HEK293T (cell line): ENCODE measurements at regions of chr15 and their contacts with region 1.

Region 1: DNA sequence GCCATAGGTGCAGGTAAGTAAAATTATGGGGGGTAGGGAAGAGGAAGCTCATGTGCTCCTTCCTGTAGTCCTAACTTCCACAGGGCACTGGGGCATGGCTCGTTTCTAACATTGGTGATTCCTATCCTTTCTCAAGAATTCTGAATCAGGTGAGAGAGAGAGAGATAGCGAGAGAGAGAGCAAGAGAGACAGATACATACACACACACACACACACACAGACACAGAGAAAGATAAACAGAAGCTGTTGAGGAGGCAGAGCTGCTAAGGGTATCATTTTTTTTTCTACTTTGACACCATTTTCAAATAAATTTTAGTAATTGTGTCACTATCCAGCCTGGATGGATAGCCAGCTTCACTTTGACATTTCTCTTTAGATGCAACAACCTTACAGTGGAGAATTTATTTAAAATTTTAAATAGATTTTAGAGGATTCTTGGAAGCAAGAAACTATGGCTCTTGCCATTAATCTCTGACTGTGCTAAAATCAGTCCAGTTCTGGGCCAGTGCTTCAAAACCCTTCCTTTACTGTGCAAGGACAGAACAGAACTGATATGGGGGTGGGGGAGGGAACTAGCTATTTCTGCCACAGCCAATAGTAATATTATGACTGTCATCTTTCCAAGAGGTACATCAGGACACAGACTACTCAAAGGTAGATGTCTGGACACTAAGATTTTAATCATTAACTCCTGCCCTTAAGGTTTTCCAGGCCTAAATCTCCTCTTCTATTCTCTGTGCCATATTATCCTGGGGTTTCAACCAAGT is 14.6 kb upstream of the RAMAC start:
- DNase-seq: no peak

Region 2: GRCh38 chr15:82985688-82986441 is 14.5 kb after region 1 on chr15 and contains the start of gene RAMAC:
- CTCF ChIA-PET with region 1: no interaction called
- POLR2A ChIA-PET with region 1: interaction called, 13 read pairs
- DNase-seq: peak; percentile 96